AG04449 (cell line): ENCODE measurements at regions of chr17 and their contacts with region 1.

Region 1: GRCh38 chr17:16521070-16521727 is 29.2 kb upstream of the LRRC75A start:
- DNase-seq: peak; percentile 57
- H3K4me3 ChIP-seq: no peak overlapping the region
- CTCF ChIP-seq: peak; percentile 78

Region 2: DNA sequence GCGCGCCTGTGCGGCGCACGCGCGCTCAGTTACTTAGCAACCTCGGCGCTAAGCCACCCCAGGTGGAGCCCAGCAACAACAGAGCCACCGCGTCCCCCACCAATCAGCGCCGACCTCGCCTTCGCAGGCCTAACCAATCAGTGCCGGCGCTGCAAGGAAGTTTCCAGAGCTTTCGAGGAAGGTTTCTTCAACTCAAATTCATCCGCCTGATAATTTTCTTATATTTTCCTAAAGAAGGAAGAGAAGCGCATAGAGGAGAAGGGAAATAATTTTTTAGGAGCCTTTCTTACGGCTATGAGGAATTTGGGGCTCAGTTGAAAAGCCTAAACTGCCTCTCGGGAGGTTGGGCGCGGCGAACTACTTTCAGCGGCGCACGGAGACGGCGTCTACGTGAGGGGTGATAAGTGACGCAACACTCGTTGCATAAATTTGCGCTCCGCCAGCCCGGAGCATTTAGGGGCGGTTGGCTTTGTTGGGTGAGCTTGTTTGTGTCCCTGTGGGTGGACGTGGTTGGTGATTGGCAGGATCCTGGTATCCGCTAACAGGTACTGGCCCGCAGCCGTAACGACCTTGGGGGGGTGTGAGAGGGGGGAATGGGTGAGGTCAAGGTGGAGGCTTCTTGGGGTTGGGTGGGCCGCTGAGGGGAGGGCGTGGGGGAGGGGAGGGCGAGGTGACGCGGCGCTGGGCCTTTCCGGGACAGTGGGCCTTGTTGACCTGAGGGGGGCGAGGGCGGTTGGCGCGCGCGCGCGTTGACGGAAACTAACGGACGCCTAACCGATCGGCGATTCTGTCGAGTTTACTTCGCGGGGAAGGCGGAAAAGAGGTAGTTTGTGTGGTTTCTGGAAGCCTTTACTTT is 140.3 kb before region 1 on chr17 and contains the start of gene UBB:
- CTCF ChIA-PET with region 1: interaction called, 23 read pairs
- POLR2A ChIA-PET with region 1: interaction called, 12 read pairs
- DNase-seq: peak; percentile 95
- H3K4me3 ChIP-seq: peak within 1 kb of the TSS; percentile 86
- CTCF ChIP-seq: peak; percentile 8

Region 3: DNA sequence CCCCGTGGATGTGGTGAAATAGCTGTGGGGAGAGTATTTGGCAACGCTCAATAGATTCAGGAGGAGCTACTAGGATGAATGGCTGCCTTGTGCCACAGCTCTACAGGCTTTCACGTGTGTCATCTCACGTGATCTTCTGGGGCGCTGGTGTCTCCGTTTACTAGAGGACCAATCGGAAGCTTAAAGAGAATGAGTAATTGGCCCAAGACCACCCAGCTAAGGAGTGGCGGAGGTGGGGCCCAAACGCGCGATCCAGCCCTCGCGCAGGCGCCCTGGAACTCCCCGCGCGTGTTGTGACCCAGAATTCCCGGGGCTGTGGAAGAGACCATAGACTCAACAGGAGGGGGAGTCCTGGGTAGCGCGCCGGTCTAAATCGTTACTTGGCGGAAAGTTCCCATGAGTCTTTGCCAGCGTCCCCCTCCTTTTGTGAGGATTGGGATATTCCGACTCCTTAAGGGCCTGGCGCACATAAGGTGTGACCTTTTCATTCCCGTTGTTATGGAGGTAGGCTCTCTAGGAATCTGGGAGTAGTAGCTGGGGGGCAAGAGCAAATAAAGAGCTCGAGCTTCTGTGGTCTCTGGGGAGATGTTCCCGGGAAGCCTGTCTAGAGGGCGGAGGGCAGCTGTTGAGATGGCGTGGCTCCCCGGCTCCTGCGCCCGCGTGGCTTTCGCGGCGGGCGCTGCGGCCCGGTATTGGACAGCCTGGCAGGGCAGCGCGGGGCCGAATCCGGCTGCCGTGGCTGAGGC is 82.5 kb before region 1 on chr17:
- CTCF ChIA-PET with region 1: interaction called, 562 read pairs
- POLR2A ChIA-PET with region 1: interaction called, 3 read pairs
- DNase-seq: peak; percentile 99
- H3K4me3 ChIP-seq: peak overlapping the region; percentile 96
- CTCF ChIP-seq: no peak

Region 4: DNA sequence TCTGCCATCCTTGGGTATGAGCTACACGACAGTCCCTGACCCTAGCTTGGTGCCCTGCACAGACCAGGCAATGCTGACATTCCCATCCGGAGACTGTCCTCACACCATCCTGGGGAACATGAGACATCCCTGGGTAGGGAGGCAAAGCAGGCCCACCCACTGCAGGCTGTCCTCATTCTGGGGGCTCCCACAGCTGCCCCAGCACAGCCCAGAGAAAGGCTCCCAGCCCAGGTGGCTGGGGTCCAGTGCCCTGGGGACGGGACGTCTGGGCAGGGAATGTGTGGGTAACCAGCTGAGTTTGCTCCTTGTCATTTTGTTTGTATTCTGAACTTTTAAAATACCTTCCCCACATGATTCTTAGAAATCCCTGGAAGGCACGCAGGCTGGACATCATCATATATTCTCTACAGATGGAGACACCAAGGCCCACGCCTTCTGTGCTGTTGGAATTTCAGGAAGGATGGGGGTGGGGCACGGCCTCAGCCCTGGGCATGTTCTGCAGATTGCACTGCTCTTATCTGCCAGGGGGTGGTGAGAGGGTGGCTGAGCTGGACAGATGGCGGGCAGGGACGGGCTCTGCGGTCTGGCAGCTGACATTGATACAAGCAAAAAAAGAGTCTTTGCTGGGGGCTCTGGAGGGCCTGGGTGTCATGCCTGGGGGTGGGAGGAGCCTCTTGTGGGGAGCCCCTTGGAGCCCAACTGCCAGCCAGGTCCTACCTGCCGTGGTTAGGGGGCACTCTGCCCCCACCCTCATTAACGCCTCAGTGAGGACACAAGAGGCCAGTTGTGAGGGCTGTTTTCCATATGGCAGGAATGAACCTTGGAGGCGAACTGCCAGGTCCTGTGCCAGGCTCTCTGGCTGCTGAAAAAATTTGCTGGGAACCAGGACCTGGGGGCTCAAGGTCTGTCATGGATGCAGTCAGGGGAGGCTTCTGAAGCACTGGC is 57.6 kb before region 1 on chr17:
- CTCF ChIA-PET with region 1: interaction called, 88 read pairs
- POLR2A ChIA-PET with region 1: interaction called, 3 read pairs
- DNase-seq: no peak
- H3K4me3 ChIP-seq: no peak overlapping the region
- CTCF ChIP-seq: peak; percentile 59

Region 5: DNA sequence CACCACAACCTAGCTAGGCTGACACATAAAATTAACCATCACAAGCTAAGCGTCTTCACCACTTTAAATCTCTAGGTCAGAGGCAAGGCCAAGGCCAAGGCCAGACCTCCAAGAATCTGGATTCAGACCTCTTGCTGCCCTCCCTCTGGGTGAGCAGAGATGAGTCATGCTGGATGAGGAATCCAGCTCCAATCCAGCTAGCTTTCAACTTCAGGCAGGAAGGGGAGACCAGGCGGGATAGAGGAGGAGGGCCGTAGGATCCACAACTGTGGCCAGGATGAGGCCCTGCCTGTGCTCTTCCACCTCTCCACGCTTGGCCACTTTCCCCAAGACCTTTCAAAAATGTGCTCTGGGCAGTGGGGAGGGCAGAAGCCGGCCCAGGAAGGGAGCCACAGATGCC is 43.9 kb before region 1 on chr17:
- CTCF ChIA-PET with region 1: interaction called, 13 read pairs
- POLR2A ChIA-PET with region 1: no interaction called
- DNase-seq: peak; percentile 21
- H3K4me3 ChIP-seq: no peak overlapping the region
- CTCF ChIP-seq: no peak

Region 6: GRCh38 chr17:16537130-16537458 is 15.9 kb after region 1 on chr17:
- CTCF ChIA-PET with region 1: interaction called, 56 read pairs
- POLR2A ChIA-PET with region 1: no interaction called
- DNase-seq: no peak
- H3K4me3 ChIP-seq: no peak overlapping the region
- CTCF ChIP-seq: no peak

Region 7: GRCh38 chr17:16599537-16599936 is 78.3 kb after region 1 on chr17:
- CTCF ChIA-PET with region 1: no interaction called
- POLR2A ChIA-PET with region 1: no interaction called
- DNase-seq: no peak
- H3K4me3 ChIP-seq: no peak overlapping the region
- CTCF ChIP-seq: no peak

Region 8: GRCh38 chr17:16639438-16639837 is 118.2 kb after region 1 on chr17:
- CTCF ChIA-PET with region 1: no interaction called
- POLR2A ChIA-PET with region 1: no interaction called
- DNase-seq: no peak
- H3K4me3 ChIP-seq: no peak overlapping the region
- CTCF ChIP-seq: no peak